ENCODE measurements at regions of chr2 and their contacts with region 1.

Region 1: GRCh38 chr2:96509114-96509846 is 4.1 kb upstream of the NEURL3 start:
- DNase-seq: peak; percentile 16
- H3K4me3 ChIP-seq: no peak overlapping the region
- H3K27me3 ChIP-seq: peaks cover 5% of the 10 kb centered on the region
- CTCF ChIP-seq: peak; percentile 99

Region 2: DNA sequence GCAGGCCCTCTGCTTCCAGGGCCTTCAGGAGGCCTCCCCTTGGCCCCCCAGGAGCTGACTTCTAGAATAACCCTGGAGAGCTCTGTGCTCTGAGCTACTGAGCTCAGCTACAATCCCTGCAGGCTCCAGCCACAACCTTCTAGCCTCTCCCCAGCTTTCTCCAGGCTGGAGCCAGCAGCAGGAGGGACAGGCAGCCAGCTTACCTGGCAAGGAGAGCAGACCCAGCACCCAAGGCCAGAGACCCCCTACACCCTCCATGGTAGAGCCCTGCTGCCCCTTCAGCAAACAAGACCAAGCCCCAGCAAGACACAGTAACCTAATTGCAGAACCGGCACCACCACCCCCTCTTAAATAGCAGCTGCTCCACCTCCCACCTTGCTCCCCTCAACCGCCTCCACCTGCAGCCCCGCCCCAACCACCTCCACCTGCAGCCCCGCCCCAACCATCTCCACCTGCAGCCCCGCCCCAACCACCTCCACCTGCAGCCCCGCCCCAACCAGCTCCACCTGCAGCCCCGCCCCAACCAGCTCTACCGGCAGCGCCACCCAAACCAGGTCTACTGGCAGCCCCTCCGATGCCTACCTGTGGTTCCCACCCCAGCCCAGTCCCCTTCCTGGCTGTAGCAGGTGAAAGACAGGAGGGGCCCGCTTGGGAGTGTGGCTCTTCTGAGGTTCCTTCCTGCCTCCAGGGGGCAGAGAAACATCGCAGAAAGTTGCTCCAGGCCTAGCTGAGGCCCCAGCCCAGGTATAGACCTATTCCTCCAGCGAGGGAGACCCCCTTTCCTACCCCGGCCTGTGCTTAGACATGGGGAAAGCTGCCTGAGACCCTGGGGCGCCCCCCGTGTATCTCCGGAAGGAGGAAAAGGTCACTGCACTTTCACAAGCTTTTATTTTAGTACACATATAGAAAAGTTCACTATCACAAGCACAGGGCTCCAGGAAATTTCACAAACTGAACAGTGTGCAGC is 370.8 kb before region 1 on chr2 and contains the start of gene ASTL:
- CTCF ChIA-PET with region 1: interaction called, 34 read pairs
- POLR2A ChIA-PET with region 1: no interaction called
- DNase-seq: no peak
- H3K4me3 ChIP-seq: no peak within 1 kb of the TSS
- H3K27me3 ChIP-seq: peaks cover 2% of the 10 kb centered on the region; the same call in 1 of the 2 replicates
- CTCF ChIP-seq: peak; percentile 74
- polyA plus RNA-seq, gene ASTL: not detected in 2 replicates

Region 3: GRCh38 chr2:96407041-96407918 is 102.0 kb before region 1 on chr2:
- CTCF ChIA-PET with region 1: interaction called, 253 read pairs
- POLR2A ChIA-PET with region 1: no interaction called
- DNase-seq: peak; percentile 4
- H3K4me3 ChIP-seq: no peak overlapping the region
- H3K27me3 ChIP-seq: peaks cover 3% of the 10 kb centered on the region
- CTCF ChIP-seq: peak; percentile 90

Region 4: DNA sequence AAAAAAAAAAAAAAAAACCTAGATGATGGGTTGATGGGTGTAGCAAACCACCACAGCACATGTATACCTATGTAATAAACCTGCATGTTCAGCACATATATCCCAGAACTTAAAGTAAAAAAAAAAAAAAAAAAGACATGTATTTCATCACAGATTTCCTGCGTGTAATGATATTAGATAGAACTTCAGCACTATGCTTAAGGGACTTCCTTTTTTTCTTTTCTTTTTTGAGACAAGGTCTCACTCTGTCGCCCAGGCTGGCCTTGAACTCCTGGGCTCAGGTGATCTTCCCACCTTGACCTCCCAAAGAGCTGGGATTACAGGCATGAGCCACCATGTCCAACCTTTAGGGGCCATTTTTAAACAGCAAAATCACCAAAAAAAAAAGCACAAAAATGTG is 46.2 kb before region 1 on chr2:
- CTCF ChIA-PET with region 1: no interaction called
- POLR2A ChIA-PET with region 1: no interaction called
- DNase-seq: no peak
- H3K4me3 ChIP-seq: no peak overlapping the region
- H3K27me3 ChIP-seq: peaks cover 5% of the 10 kb centered on the region
- CTCF ChIP-seq: no peak

Region 5: DNA sequence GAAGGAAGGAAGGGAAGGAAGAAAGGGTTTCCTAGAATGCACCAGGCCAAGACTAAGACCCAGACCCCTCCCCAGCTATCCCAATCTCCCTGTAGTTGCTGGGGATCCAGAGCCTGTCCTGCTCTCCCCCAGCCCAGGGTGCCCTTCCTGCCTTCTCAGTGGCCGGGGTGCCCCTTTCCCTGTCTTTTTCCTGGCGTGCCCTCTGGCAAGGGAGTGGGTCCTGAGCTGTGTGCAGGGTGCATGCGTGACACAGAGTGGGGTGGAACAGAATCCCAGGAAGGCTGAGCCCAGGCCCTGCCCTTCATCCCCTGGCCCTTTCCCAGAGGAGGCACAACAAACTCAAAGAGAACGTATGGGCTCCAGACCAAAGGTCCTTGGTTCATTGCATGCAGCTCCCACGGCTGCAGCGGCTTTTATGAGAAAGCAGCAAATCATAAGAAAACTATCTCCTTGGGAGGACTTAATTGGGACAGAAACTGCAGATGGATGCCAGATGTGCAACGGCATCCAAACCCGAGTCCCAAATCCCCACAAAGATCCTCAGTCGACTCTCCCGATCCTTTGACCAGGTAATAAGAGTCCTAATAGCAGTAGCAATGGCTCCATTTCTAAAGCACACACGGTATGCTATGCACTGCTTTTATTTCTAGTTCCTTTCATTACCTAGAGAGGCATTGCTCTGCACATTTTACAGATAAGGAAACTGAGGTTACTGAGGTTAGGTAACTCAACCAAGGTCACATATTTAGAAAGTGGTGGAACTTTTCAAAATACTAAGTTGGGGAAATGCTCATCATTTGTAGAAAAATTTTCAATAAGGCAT is 14.6 kb after region 1 on chr2:
- CTCF ChIA-PET with region 1: interaction called, 26 read pairs
- POLR2A ChIA-PET with region 1: no interaction called
- DNase-seq: peak; percentile 92
- H3K4me3 ChIP-seq: no peak overlapping the region
- H3K27me3 ChIP-seq: no peaks in the 10 kb centered on the region
- CTCF ChIP-seq: no peak

Region 6: DNA sequence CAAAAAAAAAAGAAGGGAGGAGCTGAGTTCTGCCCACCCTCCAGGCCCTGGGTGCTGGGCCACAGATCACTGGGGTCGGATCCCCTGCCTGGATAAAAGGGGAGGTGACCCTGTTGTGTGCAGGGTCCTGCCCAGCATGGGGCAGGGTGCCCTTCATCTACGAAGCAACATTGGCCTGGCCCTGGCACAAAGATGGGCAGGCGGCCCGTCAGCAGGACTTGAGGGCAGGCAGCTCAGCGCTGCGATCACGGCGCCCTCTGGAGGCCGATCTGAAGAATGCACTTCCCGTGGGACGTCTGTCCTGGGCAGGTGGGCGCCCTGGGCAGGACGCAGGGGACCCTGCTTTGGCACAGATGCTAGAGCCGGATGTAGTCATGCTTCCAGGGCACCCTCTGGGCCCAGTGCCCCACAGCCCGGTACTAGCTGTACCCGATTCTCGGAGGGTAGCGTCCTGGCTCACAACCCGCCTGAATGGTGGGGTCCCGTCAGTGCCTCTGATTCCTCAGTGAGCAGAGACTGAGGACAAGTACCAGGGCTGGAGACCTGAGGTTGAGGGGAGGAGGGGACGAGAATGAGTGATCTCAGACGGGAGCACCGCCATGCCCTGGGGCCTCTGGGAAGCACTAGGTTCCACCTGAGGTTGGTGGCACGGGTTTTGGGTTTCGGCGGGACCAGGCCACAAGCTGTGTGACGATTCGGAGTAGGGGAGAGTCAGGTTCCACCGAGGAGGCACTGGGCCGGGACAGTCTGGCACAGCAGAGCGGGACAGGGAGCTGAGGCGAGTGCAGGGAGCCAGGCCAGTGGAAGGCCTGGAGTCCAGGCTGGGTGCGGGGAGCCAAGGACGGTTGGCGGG is 45.2 kb after region 1 on chr2:
- CTCF ChIA-PET with region 1: interaction called, 16 read pairs
- POLR2A ChIA-PET with region 1: no interaction called
- DNase-seq: no peak
- H3K4me3 ChIP-seq: no peak overlapping the region
- H3K27me3 ChIP-seq: no peaks in the 10 kb centered on the region
- CTCF ChIP-seq: peak; percentile 93